Activated naive CD4-positive, alpha-beta T cell treated with anti-CD3 and anti-CD28 coated beads for 36 hours (primary cell): ENCODE measurements at regions of chr14 and their contacts with region 1.

Region 1: GRCh38 chr14:103628684-103629502 is at the start of gene KLC1:
- DNase-seq: peak; percentile 85
- H3K4me3 Mint-ChIP-seq: peak within 1 kb of the TSS; percentile 86
- H3K27ac Mint-ChIP-seq: peak within 1 kb of the TSS; percentile 80
- H3K4me1 Mint-ChIP-seq: peaks cover 40% of the 10 kb centered on the region
- H3K27me3 Mint-ChIP-seq: no peaks in the 10 kb centered on the region
- total RNA-seq, gene KLC1: 94.8 to 101 TPM

Region 2: GRCh38 chr14:103562429-103563225 is 66.3 kb before region 1 on chr14 and contains the starts of genes BAG5 and COA8:
- CTCF ChIA-PET with region 1: no interaction called
- intact Hi-C with region 1: loop called (anchors 2 kb)
- DNase-seq: peak; percentile 90
- H3K4me3 Mint-ChIP-seq: peak within 1 kb of the TSS; percentile 89
- H3K27ac Mint-ChIP-seq: peak within 1 kb of the TSS; percentile 91
- H3K4me1 Mint-ChIP-seq: peaks cover 65% of the 10 kb centered on the region
- H3K27me3 Mint-ChIP-seq: no peaks in the 10 kb centered on the region
- total RNA-seq, gene BAG5: 15.5 to 16.6 TPM
- total RNA-seq, gene COA8: 36.8 to 48.4 TPM

Region 3: GRCh38 chr14:103613517-103613916 is 15.4 kb before region 1 on chr14:
- CTCF ChIA-PET with region 1: no interaction called
- intact Hi-C with region 1: no loop called
- DNase-seq: no peak
- H3K4me3 Mint-ChIP-seq: no peak overlapping the region
- H3K27ac Mint-ChIP-seq: no peak overlapping the region
- H3K4me1 Mint-ChIP-seq: no peaks in the 10 kb centered on the region
- H3K27me3 Mint-ChIP-seq: peaks cover 2% of the 10 kb centered on the region

Region 4: DNA sequence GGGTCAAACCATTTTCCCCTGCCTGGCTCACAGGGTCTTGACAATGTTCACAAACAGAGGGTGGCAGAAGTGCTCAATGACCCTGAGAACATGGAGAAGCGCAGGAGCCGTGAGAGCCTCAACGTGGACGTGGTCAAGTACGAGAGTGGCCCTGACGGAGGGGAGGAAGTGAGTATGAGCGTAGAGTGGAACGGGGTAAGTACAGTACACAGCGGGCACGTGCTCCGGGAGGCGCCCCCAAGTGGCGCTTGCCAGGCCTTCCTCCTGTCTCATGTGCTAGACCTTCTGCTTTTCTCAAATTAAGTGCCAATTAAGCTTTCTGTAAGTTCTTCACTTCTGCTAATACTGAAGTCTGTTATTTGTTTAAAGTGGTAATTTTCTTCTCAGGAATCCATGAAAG is 50.5 kb after region 1 on chr14:
- CTCF ChIA-PET with region 1: interaction called, 6 read pairs
- intact Hi-C with region 1: loop called (anchors 5 kb)
- DNase-seq: peak; percentile 61
- H3K4me3 Mint-ChIP-seq: no peak overlapping the region
- H3K27ac Mint-ChIP-seq: no peak overlapping the region
- H3K4me1 Mint-ChIP-seq: peaks cover 4% of the 10 kb centered on the region
- H3K27me3 Mint-ChIP-seq: no peaks in the 10 kb centered on the region

Region 5: GRCh38 chr14:103715052-103716000 is 86.4 kb after region 1 on chr14 and contains the starts of genes XRCC3 and ZFYVE21:
- CTCF ChIA-PET with region 1: no interaction called
- intact Hi-C with region 1: loop called (anchors 1 kb)
- DNase-seq: peak; percentile 100
- H3K4me3 Mint-ChIP-seq: peak within 1 kb of the TSS; percentile 93
- H3K27ac Mint-ChIP-seq: peak within 1 kb of the TSS; percentile 86
- H3K4me1 Mint-ChIP-seq: peaks cover 45% of the 10 kb centered on the region
- H3K27me3 Mint-ChIP-seq: no peaks in the 10 kb centered on the region
- total RNA-seq, gene XRCC3: 49.0 to 50.4 TPM
- total RNA-seq, gene ZFYVE21: 9.1 to 10.4 TPM